ENCODE measurements at regions of chr2 and their contacts with region 1.

Region 1: DNA sequence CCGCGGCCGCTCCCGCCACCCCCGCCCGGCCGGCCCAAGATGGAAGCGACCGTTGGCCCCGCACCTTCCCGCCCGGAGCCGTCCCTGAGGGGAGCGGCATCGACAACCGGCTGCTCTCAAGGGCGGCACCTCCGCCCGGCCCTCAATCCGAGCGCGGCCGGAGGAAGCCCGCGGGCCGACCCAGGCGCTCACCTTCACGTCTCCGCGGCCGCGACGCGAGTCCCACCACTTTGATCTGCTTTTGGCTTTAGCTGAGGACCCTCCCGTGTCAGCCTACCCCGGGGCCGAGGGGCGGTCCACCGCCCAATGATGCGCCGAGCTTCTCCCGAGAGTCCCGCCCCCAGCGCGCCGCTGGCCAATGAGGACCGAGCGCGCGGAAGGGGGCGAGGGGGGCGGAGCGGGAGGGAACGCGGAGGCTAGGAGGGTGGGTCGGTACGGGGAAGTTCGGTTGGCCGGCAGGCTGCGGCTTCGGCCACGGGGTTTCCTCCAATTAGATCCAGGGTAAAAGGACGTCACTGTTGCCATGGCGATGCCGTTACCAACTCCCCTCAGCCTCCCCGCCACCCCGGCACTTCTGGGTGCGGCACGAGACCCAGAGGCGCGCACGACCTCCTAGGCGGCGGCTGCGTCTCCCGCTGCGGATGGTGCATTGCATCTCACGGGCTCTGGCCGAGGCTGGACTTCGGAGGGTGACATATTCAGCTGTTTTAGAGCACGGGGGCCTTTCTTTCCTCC is at the start of gene YWHAQ:
- DNase-seq: peak; percentile 98
- ATAC-seq: peak; percentile 86 to 88
- H3K4me3 ChIP-seq: peak within 1 kb of the TSS; percentile 78 to 97 (median 94)
- H3K27ac ChIP-seq: peak within 1 kb of the TSS; percentile 91 to 98 (median 96)
- H3K4me1 ChIP-seq: peaks cover 41 to 43% of the 10 kb centered on the region in 2 donors
- H3K27me3 ChIP-seq: no peaks in the 10 kb centered on the region
- CTCF ChIP-seq: no peak
- POLR2A ChIP-seq: peak; percentile 96 to 99
- total RNA-seq, gene YWHAQ: 40.3 to 63.7 (median 48.4) TPM

Region 2: DNA sequence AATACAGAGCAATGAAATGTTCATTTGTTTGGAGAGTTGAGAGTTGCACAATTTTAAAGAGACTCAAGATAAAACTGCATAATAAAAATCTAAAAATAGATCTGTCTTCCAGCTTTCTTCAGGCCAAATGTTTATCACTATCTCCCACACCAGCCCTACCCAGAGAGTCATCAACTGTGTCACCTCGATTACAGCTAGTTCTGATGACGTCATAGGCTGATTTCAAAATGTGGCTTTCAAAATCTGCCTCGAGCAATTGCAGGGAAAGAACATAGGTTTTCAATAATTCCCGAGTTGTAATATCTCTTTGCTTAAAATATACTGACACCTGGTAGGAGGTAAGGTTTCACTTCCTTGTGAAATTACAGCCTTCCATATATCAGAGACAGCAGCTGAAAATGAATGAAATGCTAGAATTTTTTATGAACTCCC is 1626.7 kb before region 1 on chr2:
- in situ Hi-C with region 1: no loop called
- intact Hi-C with region 1: loop called (anchors 10 kb)
- DNase-seq: peak; percentile 40 to 57
- ATAC-seq: peak; percentile 85 to 89
- H3K4me3 ChIP-seq: no peak overlapping the region
- H3K27ac ChIP-seq: peak overlapping the region; percentile 71 to 91 (median 74)
- H3K4me1 ChIP-seq: peaks cover 9 to 12% of the 10 kb centered on the region in 2 donors
- H3K27me3 ChIP-seq: no peaks in the 10 kb centered on the region
- CTCF ChIP-seq: no peak
- POLR2A ChIP-seq: no peak

Region 3: DNA sequence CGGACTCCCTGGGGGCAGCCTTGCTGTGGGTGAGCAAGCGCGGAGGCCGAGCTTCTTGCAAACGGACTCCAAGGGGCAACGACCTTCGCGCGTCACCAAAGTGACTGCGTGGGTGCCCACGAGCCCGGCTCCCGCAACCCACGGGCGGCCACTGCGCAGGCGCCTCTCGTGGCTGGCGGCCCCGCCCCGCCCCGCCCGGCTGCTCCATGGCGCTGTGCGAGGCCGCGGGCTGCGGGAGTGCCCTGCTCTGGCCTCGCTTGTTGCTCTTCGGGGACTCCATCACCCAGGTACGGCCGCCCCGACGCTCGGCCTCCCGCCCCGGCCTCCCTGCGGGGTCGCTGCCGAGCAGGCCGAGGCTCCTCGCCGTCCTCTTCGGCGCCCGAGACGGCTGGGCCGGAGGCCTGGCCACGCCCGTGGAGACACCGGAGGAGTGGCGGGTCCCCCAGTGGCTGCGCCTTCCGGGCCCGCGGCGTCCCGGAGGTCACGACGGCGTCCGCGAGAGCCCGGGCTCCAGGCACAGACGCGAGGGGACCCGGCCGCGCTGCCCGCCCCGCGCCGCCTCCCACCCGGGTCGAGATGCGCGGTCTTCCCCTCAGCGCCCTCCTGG is 156.5 kb before region 1 on chr2 and contains the start of gene IAH1:
- in situ Hi-C with region 1: no loop called
- intact Hi-C with region 1: loop called (anchors 5 kb)
- DNase-seq: peak; percentile 22 to 49
- ATAC-seq: peak; percentile 79 to 81
- H3K4me3 ChIP-seq: peak within 1 kb of the TSS; percentile 73 to 88 (median 79)
- H3K27ac ChIP-seq: peak within 1 kb of the TSS; percentile 80 to 92 (median 91)
- H3K4me1 ChIP-seq: peaks cover 21 to 46% of the 10 kb centered on the region in 2 donors
- H3K27me3 ChIP-seq: no peaks in the 10 kb centered on the region
- CTCF ChIP-seq: no peak
- POLR2A ChIP-seq: peak; percentile 52 to 59
- total RNA-seq, gene IAH1: 15.8 to 45.9 (median 38.6) TPM

Region 4: GRCh38 chr2:9565436-9566153 is 65.3 kb before region 1 on chr2:
- in situ Hi-C with region 1: loop called in 2 of 4 experiments (anchors 10 kb)
- intact Hi-C with region 1: no loop called
- DNase-seq: peak; percentile 88 to 94
- ATAC-seq: peak; percentile 100
- H3K4me3 ChIP-seq: peak overlapping the region; percentile 7 to 39 (median 24)
- H3K27ac ChIP-seq: peak overlapping the region; percentile 82 to 93 (median 90)
- H3K4me1 ChIP-seq: peaks cover 11 to 14% of the 10 kb centered on the region in 2 donors
- H3K27me3 ChIP-seq: no peaks in the 10 kb centered on the region
- CTCF ChIP-seq: no peak
- POLR2A ChIP-seq: peak; percentile 40 to 51

Region 5: GRCh38 chr2:9594366-9595054 is 36.4 kb before region 1 on chr2:
- in situ Hi-C with region 1: no loop called
- intact Hi-C with region 1: no loop called
- DNase-seq: peak in 1 of 2 donors; percentile 37
- ATAC-seq: peak; percentile 84 to 94
- H3K4me3 ChIP-seq: no peak overlapping the region
- H3K27ac ChIP-seq: peak overlapping the region; percentile 35 to 69 (median 55)
- H3K4me1 ChIP-seq: peaks cover 25 to 39% of the 10 kb centered on the region in 2 donors
- H3K27me3 ChIP-seq: no peaks in the 10 kb centered on the region
- CTCF ChIP-seq: no peak
- POLR2A ChIP-seq: no peak

Region 6: GRCh38 chr2:9675415-9676351 is 44.8 kb after region 1 on chr2:
- in situ Hi-C with region 1: no loop called
- intact Hi-C with region 1: no loop called
- DNase-seq: no peak
- ATAC-seq: no peak
- H3K4me3 ChIP-seq: no peak overlapping the region
- H3K27ac ChIP-seq: no peak overlapping the region
- H3K4me1 ChIP-seq: no peaks in the 10 kb centered on the region
- H3K27me3 ChIP-seq: no peaks in the 10 kb centered on the region
- CTCF ChIP-seq: no peak
- POLR2A ChIP-seq: no peak

Region 7: GRCh38 chr2:9739531-9739964 is 108.6 kb after region 1 on chr2:
- in situ Hi-C with region 1: no loop called
- intact Hi-C with region 1: loop called (anchors 5 kb)
- DNase-seq: peak; percentile 28 to 60
- ATAC-seq: peak; percentile 37 to 39
- H3K4me3 ChIP-seq: peak overlapping the region; percentile 42 to 57 (median 50)
- H3K27ac ChIP-seq: peak overlapping the region; percentile 81 to 91 (median 86)
- H3K4me1 ChIP-seq: peaks cover 22 to 23% of the 10 kb centered on the region in 2 donors
- H3K27me3 ChIP-seq: no peaks in the 10 kb centered on the region
- CTCF ChIP-seq: no peak
- POLR2A ChIP-seq: no peak

Measured in gastrocnemius medialis (tissue), 4 donors.